Gastrocnemius medialis (tissue), 4 donors: ENCODE measurements at regions of chr7 and their contacts with region 1.

Region 1: DNA sequence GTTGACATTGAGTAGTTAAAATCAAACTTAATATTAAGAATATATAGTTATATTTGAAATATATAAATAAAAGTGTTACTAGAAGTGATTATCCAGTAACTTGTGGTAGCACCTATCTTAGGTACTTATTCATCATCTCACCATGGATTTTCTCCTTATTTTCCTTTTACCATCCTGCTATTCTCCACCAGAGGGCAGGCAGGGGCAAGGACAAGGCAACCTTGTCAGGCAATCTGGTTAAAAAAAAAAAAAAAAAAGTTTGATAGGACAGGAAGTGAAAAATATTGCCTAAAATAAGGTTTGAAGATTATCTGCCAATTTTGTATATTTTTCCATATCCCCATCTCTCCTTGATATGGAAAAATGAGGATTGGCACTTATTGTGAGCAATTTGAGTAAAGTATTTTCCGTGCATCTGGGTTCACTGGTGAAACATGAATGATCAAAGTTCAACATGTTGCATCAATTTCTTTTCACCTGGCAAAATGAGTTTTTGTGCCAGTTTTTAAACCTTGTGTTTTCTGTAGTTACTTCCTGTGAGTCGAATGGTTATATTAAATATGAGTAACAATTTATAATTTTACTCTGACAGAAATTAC is 256.7 kb downstream of the AGMO start:
- DNase-seq: no peak
- ATAC-seq: no peak
- H3K4me3 ChIP-seq: no peak overlapping the region
- H3K27ac ChIP-seq: no peak overlapping the region
- H3K4me1 ChIP-seq: no peaks in the 10 kb centered on the region
- H3K27me3 ChIP-seq: no peaks in the 10 kb centered on the region
- CTCF ChIP-seq: peak; percentile 26 to 68 (median 40)
- POLR2A ChIP-seq: no peak

Region 2: DNA sequence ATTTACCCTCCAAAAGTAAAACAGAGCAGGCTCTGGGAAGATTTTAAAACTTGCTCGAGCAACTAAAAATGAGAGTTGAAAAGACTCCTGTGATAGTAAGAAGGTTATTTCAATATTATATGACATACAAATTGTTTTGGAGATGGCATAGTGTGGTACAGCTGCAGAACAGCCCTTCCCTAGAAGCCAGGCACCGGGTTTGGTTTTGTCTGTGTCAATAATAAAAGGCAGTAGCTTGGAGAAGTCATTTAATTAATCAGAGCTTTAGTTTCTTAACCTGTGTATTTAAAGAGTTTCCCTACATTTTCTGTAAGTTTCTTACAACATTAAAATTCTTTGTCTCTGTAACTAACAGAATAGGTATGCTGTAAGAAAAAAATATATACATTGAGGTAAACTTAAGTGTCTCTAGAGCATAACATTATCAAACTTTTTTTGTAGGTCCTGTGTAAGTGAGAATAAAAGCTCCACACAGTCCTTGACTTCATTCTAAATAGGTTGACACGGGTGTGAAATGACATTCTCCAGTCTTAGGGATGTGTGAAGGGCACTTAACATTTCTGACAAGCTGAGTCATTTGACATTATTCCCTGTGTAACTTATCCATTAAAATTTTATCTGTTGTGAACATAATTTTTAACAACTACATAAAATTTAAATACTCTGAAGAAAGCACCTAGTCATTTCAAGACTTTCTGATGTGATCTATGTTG is 890.7 kb before region 1 on chr7:
- in situ Hi-C with region 1: no loop called
- intact Hi-C with region 1: no loop called
- DNase-seq: no peak
- ATAC-seq: no peak
- H3K4me3 ChIP-seq: no peak overlapping the region
- H3K27ac ChIP-seq: no peak overlapping the region
- H3K4me1 ChIP-seq: no peaks in the 10 kb centered on the region
- H3K27me3 ChIP-seq: no peaks in the 10 kb centered on the region
- CTCF ChIP-seq: no peak
- POLR2A ChIP-seq: no peak

Region 3: DNA sequence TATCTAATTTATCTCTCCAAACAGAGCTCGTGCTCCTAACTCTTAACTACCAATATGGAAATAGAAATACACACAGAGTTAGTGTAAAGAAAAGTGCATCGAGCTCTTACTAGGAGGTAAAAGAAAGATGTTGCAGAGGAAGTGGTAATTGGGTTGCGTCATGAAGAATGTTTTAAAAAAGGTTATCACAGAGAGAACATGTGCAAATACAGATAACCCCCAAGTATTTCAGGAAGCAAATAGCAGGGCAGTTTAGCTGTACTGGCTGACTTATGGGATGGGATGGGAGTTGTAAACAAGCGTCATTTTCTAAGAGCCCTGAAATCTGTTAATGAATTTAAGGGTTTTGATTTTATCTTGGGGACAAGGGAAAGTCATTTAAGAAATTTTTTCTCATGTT is 102.8 kb after region 1 on chr7:
- in situ Hi-C with region 1: no loop called
- intact Hi-C with region 1: no loop called
- DNase-seq: no peak
- ATAC-seq: no peak
- H3K4me3 ChIP-seq: no peak overlapping the region
- H3K27ac ChIP-seq: no peak overlapping the region
- H3K4me1 ChIP-seq: no peaks in the 10 kb centered on the region
- H3K27me3 ChIP-seq: no peaks in the 10 kb centered on the region
- CTCF ChIP-seq: no peak
- POLR2A ChIP-seq: no peak

Region 4: DNA sequence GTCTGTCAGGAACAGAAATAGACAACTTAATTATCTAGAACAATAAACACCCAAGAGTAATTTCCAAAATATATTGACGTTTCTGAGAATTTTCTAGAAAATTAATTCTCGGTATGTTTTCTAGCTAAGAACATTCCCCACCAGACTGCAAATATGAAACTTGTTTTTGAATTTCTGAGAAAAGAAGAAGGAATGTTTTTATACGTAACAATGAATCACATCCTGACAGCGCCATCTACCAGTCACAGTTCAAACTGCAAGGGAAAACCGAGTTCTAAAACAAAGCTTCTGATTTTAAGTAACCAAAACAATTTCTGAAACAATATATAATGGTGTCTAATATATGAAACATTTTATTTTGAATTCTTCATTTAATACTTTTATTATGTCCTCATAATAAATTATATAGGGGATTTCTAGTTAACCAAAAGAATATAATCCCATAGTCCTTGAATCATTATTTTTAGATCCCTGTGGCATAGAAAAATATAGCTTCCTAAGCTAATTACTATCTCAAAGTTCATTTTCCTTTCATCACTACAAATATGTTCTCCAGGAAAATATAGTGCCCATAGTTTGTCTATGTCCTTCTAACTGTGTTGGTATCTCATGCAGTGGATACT is 415.9 kb after region 1 on chr7:
- in situ Hi-C with region 1: loop called in 3 of 4 experiments (anchors 10 to 25 kb)
- intact Hi-C with region 1: no loop called
- DNase-seq: no peak
- ATAC-seq: no peak
- H3K4me3 ChIP-seq: no peak overlapping the region
- H3K27ac ChIP-seq: peak overlapping the region in 1 of 4 donors; percentile 4
- H3K4me1 ChIP-seq: peaks cover 0 to 3% of the 10 kb centered on the region in 2 donors
- H3K27me3 ChIP-seq: no peaks in the 10 kb centered on the region
- CTCF ChIP-seq: peak in 4 of 5 experiments; percentile 31 to 63 (median 52)
- POLR2A ChIP-seq: no peak

Region 5: GRCh38 chr7:16078076-16078952 is 773.2 kb after region 1 on chr7:
- in situ Hi-C with region 1: loop called (anchors 10 to 25 kb)
- intact Hi-C with region 1: loop called (anchors 5 kb)
- DNase-seq: no peak
- ATAC-seq: no peak
- H3K4me3 ChIP-seq: no peak overlapping the region
- H3K27ac ChIP-seq: no peak overlapping the region
- H3K4me1 ChIP-seq: no peaks in the 10 kb centered on the region
- H3K27me3 ChIP-seq: no peaks in the 10 kb centered on the region
- CTCF ChIP-seq: peak; percentile 19 to 64 (median 50)
- POLR2A ChIP-seq: no peak